T-cell (primary cell): ENCODE measurements at regions of chr21 and their contacts with region 1.

Region 1: GRCh38 chr21:35690436-35690835 is 369.9 kb downstream of the SETD4 start:
- DNase-seq: no peak
- ATAC-seq: no peak
- H3K4me3 ChIP-seq: no peak overlapping the region
- H3K4me3 Mint-ChIP-seq: no peak overlapping the region
- H3K27ac ChIP-seq: no peak overlapping the region
- H3K27ac Mint-ChIP-seq: no peak overlapping the region
- H3K4me1 ChIP-seq: no peaks in the 10 kb centered on the region
- H3K4me1 Mint-ChIP-seq: no peaks in the 10 kb centered on the region
- H3K27me3 ChIP-seq: peaks cover 0 to 17% of the 10 kb centered on the region in 2 experiments
- H3K27me3 Mint-ChIP-seq: peaks cover 16 to 25% of the 10 kb centered on the region in 2 donors

Region 2: DNA sequence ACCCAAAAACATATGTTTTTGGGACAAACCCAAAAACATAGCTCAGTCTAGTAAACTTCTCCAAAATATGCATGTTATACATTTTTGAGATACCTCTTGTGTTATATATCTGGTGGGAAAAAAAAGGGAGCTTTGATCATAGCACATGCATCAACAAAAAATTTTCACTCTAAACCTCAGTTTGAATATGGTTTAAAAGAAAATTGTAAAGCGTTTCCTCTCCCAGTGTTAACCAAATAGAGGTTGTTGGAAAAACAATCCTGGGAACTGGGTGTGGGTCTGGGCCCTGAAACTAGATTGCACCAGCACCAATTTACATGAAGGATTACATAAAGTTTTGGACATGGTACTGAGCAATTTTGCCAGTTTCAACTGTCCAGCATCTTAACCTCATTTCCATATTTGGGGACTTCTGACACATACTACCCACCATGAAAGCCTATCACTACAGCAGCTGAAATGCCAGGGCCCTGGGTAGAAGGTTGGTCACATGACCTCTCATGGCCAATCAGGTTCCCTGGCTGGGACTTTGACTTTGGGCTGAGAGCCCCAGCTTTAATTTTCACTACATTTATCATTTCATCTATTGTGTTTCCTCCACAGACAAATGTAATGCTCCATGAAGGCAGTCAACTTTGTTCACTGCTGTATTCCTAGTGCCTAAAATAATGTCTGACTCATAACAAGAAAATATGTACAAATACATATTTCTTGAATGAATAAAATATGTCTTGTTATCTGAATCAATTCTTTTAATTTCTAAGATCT is 219.2 kb after region 1 on chr21:
- CTCF ChIA-PET with region 1: no interaction called
- POLR2A ChIA-PET with region 1: interaction called in 1 of 2 experiments, 10 read pairs
- DNase-seq: no peak
- ATAC-seq: no peak
- H3K4me3 ChIP-seq: no peak overlapping the region
- H3K4me3 Mint-ChIP-seq: no peak overlapping the region
- H3K27ac ChIP-seq: no peak overlapping the region
- H3K27ac Mint-ChIP-seq: no peak overlapping the region
- H3K4me1 ChIP-seq: no peaks in the 10 kb centered on the region
- H3K4me1 Mint-ChIP-seq: no peaks in the 10 kb centered on the region
- H3K27me3 ChIP-seq: peaks cover 0 to 8% of the 10 kb centered on the region in 2 experiments
- H3K27me3 Mint-ChIP-seq: peaks cover 22 to 23% of the 10 kb centered on the region in 2 donors